Dendritic cell treated with granulocyte-macrophage colony-stimulating factor and Interleukin-4, amounts not matched to agents 40 ng/mL and 50 ng/mL, for 4 days (primary cell): ENCODE measurements at regions of chr5 and their contacts with region 1.

Region 1: GRCh38 chr5:1564182-1564748 is 40.5 kb upstream of the LPCAT1 start:
- H3K4me3 Mint-ChIP-seq: peak overlapping the region; percentile 79
- H3K27ac Mint-ChIP-seq: peak overlapping the region; percentile 93
- H3K4me1 Mint-ChIP-seq: peaks cover 77% of the 10 kb centered on the region
- H3K27me3 Mint-ChIP-seq: peaks cover 8% of the 10 kb centered on the region

Region 2: DNA sequence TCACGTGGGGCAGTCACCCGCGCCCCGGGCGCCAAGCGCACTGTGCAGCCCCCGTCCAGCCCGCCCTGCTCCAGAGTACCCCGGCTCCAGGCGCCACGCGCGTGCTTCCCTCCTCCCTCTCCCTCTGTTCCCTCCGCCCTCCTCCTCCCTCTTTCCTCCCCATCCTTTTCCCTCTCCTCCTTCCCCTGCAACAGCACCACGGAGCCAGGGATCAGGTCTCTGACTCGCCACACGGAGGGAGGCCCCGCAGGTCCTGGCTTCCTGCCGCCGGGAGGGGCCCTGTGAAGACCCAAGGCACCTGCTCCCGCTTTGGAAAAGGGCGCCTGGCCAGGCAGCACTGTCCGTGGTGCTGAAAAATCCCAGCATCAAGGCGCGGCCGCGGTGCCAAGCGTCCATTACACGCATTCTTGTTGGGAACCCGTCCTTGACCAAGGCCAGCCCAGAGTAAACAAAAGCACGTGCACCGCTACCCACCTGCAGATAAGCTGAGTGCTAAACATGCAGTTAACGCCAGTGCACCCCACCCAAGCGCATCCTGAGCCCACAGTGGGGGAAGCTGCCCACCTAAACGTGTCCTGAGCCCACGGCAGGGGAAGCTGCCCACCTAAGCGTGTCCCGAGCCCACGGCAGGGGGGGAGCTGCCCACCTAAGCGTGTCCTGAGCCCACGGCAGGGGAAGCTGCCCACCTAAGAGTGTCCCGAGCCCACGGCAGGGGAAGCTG is 317.4 kb before region 1 on chr5:
- intact Hi-C with region 1: no loop called
- H3K4me3 Mint-ChIP-seq: no peak overlapping the region
- H3K27ac Mint-ChIP-seq: no peak overlapping the region
- H3K4me1 Mint-ChIP-seq: no peaks in the 10 kb centered on the region
- H3K27me3 Mint-ChIP-seq: peaks cover 20% of the 10 kb centered on the region

Region 3: GRCh38 chr5:1488943-1489680 is 75.2 kb before region 1 on chr5:
- intact Hi-C with region 1: loop called (anchors 5 kb)
- H3K4me3 Mint-ChIP-seq: peak overlapping the region; percentile 39
- H3K27ac Mint-ChIP-seq: peak overlapping the region; percentile 84
- H3K4me1 Mint-ChIP-seq: peaks cover 54% of the 10 kb centered on the region
- H3K27me3 Mint-ChIP-seq: no peaks in the 10 kb centered on the region